ENCODE measurements at regions of chr7 and their contacts with region 1.

Region 1: GRCh38 chr7:54339073-54339472 is 203.1 kb upstream of the VSTM2A start:
- DNase-seq: no peak
- ATAC-seq: no peak
- H3K4me3 ChIP-seq: no peak overlapping the region
- H3K4me3 Mint-ChIP-seq: no peak overlapping the region
- H3K27ac ChIP-seq: no peak overlapping the region
- H3K27ac Mint-ChIP-seq: no peak overlapping the region
- H3K4me1 ChIP-seq: no peaks in the 10 kb centered on the region
- H3K4me1 Mint-ChIP-seq: no peaks in the 10 kb centered on the region
- H3K27me3 ChIP-seq: no peaks in the 10 kb centered on the region
- H3K27me3 Mint-ChIP-seq: no peaks in the 10 kb centered on the region

Region 2: DNA sequence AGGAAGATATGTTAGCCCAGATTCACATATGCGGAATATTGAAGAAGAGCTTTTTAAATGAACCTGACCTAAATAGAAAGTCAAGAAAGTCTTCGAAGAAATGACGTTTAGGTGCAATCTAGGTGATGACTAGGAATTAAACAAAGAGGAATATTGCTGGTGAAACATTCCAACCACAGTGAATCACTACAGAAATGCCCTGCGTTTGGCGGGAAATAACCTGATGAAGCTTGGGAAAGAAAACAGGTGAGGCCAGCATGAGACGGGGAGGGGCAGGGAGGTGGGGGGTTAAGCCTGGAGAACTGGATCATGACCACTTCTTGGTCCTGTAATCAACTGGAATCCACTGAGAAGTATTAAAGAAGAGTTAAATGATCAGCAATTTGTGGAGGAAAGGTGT is 96.3 kb before region 1 on chr7:
- CTCF ChIA-PET with region 1: no interaction called
- POLR2A ChIA-PET with region 1: no interaction called
- intact Hi-C with region 1: loop called in 1 of 2 experiments (anchors 10 kb)
- DNase-seq: no peak
- ATAC-seq: no peak
- H3K4me3 ChIP-seq: no peak overlapping the region
- H3K4me3 Mint-ChIP-seq: no peak overlapping the region
- H3K27ac ChIP-seq: no peak overlapping the region
- H3K27ac Mint-ChIP-seq: no peak overlapping the region
- H3K4me1 ChIP-seq: no peaks in the 10 kb centered on the region
- H3K4me1 Mint-ChIP-seq: peaks cover 0 to 2% (median 0%) of the 10 kb centered on the region in 7 donors
- H3K27me3 ChIP-seq: no peaks in the 10 kb centered on the region
- H3K27me3 Mint-ChIP-seq: no peaks in the 10 kb centered on the region

Region 3: DNA sequence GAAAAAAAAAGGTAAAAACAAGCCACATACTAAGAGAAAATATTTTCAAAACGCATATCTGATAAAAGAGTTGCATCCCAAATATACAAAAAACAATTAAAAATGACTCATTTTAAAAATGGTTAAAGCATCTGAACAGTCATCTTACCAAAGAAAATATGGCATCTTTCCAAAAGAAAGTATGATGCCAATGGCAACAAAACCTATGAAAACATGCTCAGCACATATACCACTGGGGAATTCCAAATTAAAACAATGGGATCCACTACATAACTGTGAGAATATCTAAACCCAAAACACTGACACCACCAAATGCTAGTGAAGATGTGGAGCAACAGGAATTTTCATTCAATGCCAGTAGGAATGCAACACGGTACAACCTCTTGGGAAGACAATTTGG is 242.4 kb after region 1 on chr7:
- CTCF ChIA-PET with region 1: no interaction called
- POLR2A ChIA-PET with region 1: no interaction called
- intact Hi-C with region 1: no loop called
- DNase-seq: no peak
- ATAC-seq: no peak
- H3K4me3 ChIP-seq: no peak overlapping the region
- H3K4me3 Mint-ChIP-seq: no peak overlapping the region
- H3K27ac ChIP-seq: no peak overlapping the region
- H3K27ac Mint-ChIP-seq: no peak overlapping the region
- H3K4me1 ChIP-seq: no peaks in the 10 kb centered on the region
- H3K4me1 Mint-ChIP-seq: no peaks in the 10 kb centered on the region
- H3K27me3 ChIP-seq: no peaks in the 10 kb centered on the region
- H3K27me3 Mint-ChIP-seq: no peaks in the 10 kb centered on the region

Measured in naive thymus-derived CD4-positive, alpha-beta T cell (primary cell).